Heart right ventricle (tissue), 16 donors: ENCODE measurements at regions of chr9 and their contacts with region 1.

Region 1: DNA sequence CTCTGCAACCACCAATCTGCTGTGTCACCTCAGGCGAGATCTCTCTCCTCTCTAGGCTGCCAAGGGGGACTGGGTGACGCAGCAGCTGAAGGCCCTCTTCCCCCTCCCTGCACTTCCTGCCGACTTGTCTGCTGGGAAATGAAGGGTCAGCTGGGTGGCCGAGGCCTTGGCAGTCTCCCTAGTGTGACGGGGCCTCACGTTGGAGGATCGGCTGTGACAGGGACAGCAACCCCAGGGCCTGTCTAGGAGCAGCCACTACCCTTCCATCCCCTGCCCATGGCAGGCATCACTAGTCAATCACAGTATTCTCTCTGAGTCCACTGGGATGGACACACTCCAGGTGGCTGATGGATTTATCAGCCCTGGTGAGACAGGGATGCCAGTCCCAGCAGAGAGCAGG is 107.3 kb upstream of the SARDH start:
- DNase-seq: peak; percentile 83 to 89
- ATAC-seq: peak; percentile 76 to 96 (median 92)
- H3K4me3 ChIP-seq: peak overlapping the region in 6 of 10 donors; percentile 32 to 43 (median 39)
- H3K27ac ChIP-seq: peak overlapping the region in 9 of 10 donors; percentile 65 to 93 (median 75)
- H3K4me1 ChIP-seq: peaks cover 0 to 33% (median 15%) of the 10 kb centered on the region in 9 donors
- H3K27me3 ChIP-seq: no peaks in the 10 kb centered on the region
- CTCF ChIP-seq: no peak

Region 2: DNA sequence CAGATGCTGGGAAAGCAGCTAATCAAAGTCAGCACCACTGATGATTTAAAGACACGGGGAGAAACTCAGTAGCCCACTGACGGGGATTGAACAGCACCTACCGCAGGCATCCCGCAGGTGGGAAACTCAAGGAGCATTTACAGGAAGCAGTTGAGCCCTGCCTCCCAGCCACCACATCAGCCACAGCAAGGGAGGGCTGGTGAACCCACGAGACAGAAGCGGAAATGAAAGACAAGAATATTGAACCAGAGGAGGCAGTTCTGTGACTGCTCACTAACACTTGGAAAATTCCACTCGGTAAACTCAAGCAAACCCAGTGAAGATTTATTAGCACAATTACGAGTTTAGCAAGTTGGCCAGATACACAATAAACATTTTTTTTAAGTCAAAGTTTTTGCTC is 225.6 kb before region 1 on chr9:
- intact Hi-C with region 1: no loop called
- DNase-seq: no peak
- ATAC-seq: no peak
- H3K4me3 ChIP-seq: no peak overlapping the region
- H3K27ac ChIP-seq: no peak overlapping the region
- H3K4me1 ChIP-seq: no peaks in the 10 kb centered on the region
- H3K27me3 ChIP-seq: peaks cover 0 to 85% (median 68%) of the 10 kb centered on the region in 7 donors
- CTCF ChIP-seq: no peak

Region 3: DNA sequence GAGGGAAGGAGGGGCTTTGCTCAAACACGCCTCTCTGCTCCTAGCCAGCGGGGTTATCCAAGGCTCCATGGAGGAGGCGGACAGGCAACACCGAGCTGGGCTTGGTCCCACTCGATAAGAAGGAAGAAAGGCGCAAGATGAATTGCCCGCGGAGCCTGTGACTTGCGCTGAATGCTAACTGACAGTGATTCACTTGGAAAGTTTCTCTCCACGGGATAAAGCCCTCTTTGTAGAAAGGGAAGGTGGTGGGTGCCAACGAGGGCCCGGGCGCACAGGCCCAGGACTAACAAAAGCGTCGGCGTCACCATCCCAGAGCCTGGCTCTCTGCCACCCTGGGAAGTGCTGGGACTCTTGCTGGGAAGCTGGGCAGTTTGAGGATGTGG is 70.7 kb after region 1 on chr9:
- intact Hi-C with region 1: loop called in 1 of 10 experiments (anchors 10 kb)
- DNase-seq: no peak
- ATAC-seq: no peak
- H3K4me3 ChIP-seq: no peak overlapping the region
- H3K27ac ChIP-seq: no peak overlapping the region
- H3K4me1 ChIP-seq: peaks cover 0 to 41% (median 16%) of the 10 kb centered on the region in 9 donors
- H3K27me3 ChIP-seq: no peaks in the 10 kb centered on the region
- CTCF ChIP-seq: no peak

Region 4: DNA sequence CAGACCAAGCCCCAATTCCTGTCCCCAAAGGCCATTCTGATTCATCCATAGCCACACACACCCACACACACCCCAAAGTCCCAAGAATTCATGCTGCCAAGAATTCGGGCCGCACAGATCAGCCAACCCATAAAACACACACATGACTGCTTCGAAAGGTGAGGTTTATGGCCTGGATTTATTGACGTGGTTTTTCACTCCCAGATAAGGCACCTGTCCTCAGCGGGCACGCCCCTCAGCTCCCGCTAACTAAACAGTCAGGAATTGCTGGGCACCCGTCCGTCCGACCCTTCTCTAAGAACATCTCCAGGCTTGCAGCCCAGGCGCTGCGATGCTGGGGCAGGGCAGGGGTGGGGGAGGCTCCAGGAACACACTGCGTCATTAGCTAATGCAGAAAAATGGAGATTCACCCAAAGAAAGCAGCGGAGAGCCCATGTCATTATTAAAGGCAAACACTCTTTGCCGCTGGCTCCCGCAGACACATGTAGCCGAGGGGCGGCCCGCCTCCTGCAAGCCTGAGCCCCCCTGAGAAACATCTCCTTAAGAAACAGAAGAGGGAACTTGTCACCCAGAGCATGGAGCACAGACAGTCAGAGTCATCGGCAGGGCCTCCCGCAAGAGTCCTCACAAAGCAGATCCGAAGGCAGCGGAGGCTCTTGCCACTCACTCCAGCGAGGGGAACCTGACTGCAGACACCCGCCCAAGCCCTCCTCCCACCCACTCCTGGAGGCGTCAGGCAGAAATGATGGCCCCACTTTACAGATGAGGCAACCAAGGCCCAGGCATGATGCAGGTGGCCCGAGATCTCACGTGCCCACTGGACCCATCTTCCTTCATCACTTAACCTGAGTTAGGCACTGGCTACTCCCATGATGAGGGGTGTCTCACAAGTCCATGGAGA is 126.9 kb after region 1 on chr9:
- intact Hi-C with region 1: no loop called
- DNase-seq: peak in 1 of 2 donors; percentile 7
- ATAC-seq: no peak
- H3K4me3 ChIP-seq: no peak overlapping the region
- H3K27ac ChIP-seq: no peak overlapping the region
- H3K4me1 ChIP-seq: peaks cover 0 to 19% (median 0%) of the 10 kb centered on the region in 9 donors
- H3K27me3 ChIP-seq: no peaks in the 10 kb centered on the region
- CTCF ChIP-seq: no peak

Region 5: GRCh38 chr9:134551650-134552348 is 706.4 kb after region 1 on chr9:
- intact Hi-C with region 1: no loop called
- DNase-seq: no peak
- ATAC-seq: peak in 4 of 8 donors; percentile 25 to 50 (median 40)
- H3K4me3 ChIP-seq: no peak overlapping the region
- H3K27ac ChIP-seq: peak overlapping the region in 1 of 10 donors; percentile 47
- H3K4me1 ChIP-seq: peaks cover 0 to 39% (median 16%) of the 10 kb centered on the region in 9 donors
- H3K27me3 ChIP-seq: peaks cover 0 to 57% (median 19%) of the 10 kb centered on the region in 7 donors
- CTCF ChIP-seq: no peak